Psoas muscle (tissue), 8 donors: ENCODE measurements at regions of chr7 and their contacts with region 1.

Region 1: DNA sequence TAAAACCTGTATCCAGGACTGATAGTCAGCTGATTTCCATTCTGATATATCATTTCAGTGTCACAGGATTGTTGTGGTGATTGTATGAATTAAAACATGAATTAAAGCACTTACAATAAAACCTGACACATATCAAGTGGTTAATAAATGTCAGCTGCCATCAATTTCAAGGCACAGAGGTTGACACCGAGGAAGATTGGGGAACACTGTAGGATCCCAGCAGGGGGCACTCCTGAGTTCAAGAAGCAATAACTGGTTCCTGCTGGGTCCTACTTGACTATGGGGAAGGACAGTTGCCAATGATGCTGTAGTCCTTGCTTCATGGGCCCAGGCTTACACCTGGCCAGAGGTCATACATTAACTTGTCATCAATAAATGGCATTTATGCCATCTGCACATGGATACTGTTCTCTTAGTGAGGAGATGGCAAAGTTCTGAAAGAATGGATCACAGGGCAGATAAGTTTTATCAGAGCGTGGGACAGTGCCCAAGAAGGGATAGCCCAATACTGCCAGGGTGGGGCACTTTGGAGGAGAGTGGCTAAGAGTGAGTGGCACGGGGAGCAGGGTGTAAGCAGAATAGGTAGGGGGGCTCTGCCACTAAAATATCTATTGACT is 24.1 kb downstream of the FZD1 start:
- DNase-seq: peak in 1 of 2 donors; percentile 16
- ATAC-seq: no peak
- H3K4me3 ChIP-seq: no peak overlapping the region
- H3K27ac ChIP-seq: no peak overlapping the region
- H3K4me1 ChIP-seq: peaks cover 7% of the 10 kb centered on the region
- H3K27me3 ChIP-seq: no peaks in the 10 kb centered on the region
- CTCF ChIP-seq: peak; percentile 33

Region 2: DNA sequence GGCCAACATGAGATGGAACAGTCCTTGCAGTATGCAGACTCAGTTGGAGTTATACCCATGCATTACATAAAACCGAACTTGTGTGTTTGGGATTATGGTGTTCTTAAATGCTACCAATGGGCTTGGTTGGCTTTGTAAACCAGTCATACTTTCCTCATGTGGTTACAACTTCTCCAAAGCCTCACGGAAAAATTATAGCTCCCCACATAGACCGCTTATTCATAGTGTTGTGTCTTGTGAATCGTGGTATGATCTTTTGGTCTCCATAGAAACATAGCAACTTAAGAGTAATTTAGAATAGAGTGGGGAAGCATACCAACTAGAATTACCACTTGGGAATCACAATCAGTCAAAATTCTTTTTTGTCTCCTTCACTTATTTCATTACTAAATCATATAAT is 136.4 kb before region 1 on chr7:
- intact Hi-C with region 1: no loop called
- DNase-seq: no peak
- ATAC-seq: no peak
- H3K4me3 ChIP-seq: no peak overlapping the region
- H3K27ac ChIP-seq: no peak overlapping the region
- H3K4me1 ChIP-seq: no peaks in the 10 kb centered on the region
- H3K27me3 ChIP-seq: no peaks in the 10 kb centered on the region
- CTCF ChIP-seq: no peak

Region 3: DNA sequence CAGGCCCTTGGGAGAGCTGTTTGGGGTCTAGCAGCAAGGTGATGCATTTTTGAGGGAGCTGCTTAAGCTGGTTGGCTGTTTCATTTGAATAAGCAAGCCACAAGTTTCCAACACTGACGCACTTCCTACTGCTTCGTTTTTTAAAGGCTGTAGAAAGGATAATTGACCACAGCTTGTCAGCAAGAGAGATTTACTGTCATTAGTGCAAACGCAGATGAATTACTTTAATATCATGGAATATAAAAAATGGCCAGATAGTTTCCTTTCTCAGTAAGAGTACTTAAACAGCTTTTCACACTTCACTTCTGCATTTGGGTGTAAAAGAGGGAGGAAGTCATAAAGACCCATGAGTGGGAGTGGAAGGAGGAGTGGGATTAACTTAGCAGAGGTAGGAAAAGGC is 37.4 kb after region 1 on chr7:
- intact Hi-C with region 1: no loop called
- DNase-seq: no peak
- ATAC-seq: no peak
- H3K4me3 ChIP-seq: no peak overlapping the region
- H3K27ac ChIP-seq: no peak overlapping the region
- H3K4me1 ChIP-seq: no peaks in the 10 kb centered on the region
- H3K27me3 ChIP-seq: no peaks in the 10 kb centered on the region
- CTCF ChIP-seq: no peak

Region 4: DNA sequence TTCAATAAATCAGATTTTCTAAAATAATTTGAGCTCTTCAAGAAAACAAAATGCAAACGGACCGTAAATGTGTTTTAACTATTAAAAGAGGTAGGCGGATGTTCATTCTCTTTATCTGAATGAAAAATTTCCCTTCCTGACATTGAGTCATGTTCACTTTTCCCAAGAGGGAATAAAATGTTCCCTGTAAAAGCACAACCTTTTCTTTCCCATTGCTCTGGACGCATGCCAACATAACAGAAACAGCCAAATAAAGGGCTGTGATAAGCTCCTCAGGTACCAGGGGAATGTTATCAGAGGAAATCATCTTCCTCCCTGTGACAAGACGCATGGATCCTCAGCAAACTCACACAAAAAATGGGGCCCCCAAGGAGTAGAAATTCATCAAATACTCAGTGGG is 340.4 kb after region 1 on chr7:
- intact Hi-C with region 1: loop called in 1 of 2 experiments (anchors 10 kb)
- DNase-seq: no peak
- ATAC-seq: no peak
- H3K4me3 ChIP-seq: no peak overlapping the region
- H3K27ac ChIP-seq: no peak overlapping the region
- H3K4me1 ChIP-seq: no peaks in the 10 kb centered on the region
- H3K27me3 ChIP-seq: no peaks in the 10 kb centered on the region
- CTCF ChIP-seq: no peak

Region 5: DNA sequence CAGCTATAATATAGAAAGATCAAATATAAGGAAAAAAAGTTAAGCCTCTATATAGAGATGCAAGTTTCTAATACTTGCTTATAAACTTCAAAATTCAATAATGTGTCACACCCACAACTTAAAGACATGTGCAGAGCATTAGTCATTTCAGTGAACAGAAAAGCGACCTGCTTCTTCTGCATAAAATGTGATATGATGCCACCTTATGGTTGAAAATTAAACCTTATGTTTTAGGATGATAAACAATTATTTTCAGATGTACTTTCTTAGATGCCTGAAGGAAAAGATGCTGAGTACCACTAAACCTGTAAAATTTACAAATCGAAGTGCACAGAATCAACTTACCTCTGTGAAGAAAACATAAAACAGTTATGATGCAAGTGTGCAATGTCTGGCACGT is 496.1 kb after region 1 on chr7:
- intact Hi-C with region 1: loop called in 1 of 2 experiments (anchors 10 kb)
- DNase-seq: no peak
- ATAC-seq: no peak
- H3K4me3 ChIP-seq: no peak overlapping the region
- H3K27ac ChIP-seq: no peak overlapping the region
- H3K4me1 ChIP-seq: no peaks in the 10 kb centered on the region
- H3K27me3 ChIP-seq: no peaks in the 10 kb centered on the region
- CTCF ChIP-seq: peak; percentile 17